Naive thymus-derived CD4-positive, alpha-beta T cell (primary cell): ENCODE measurements at regions of chr6 and their contacts with region 1.

Region 1: GRCh38 chr6:37324131-37325033 is 29.4 kb upstream of the RNF8 start:
- DNase-seq: no peak
- ATAC-seq: no peak
- H3K4me3 ChIP-seq: no peak overlapping the region
- H3K4me3 Mint-ChIP-seq: no peak overlapping the region
- H3K27ac ChIP-seq: no peak overlapping the region
- H3K27ac Mint-ChIP-seq: peak overlapping the region in 5 of 9 donors; percentile 2 to 48 (median 11)
- H3K4me1 ChIP-seq: no peaks in the 10 kb centered on the region
- H3K4me1 Mint-ChIP-seq: peaks cover 0 to 16% (median 4%) of the 10 kb centered on the region in 7 donors
- H3K27me3 ChIP-seq: no peaks in the 10 kb centered on the region
- H3K27me3 Mint-ChIP-seq: no peaks in the 10 kb centered on the region

Region 2: DNA sequence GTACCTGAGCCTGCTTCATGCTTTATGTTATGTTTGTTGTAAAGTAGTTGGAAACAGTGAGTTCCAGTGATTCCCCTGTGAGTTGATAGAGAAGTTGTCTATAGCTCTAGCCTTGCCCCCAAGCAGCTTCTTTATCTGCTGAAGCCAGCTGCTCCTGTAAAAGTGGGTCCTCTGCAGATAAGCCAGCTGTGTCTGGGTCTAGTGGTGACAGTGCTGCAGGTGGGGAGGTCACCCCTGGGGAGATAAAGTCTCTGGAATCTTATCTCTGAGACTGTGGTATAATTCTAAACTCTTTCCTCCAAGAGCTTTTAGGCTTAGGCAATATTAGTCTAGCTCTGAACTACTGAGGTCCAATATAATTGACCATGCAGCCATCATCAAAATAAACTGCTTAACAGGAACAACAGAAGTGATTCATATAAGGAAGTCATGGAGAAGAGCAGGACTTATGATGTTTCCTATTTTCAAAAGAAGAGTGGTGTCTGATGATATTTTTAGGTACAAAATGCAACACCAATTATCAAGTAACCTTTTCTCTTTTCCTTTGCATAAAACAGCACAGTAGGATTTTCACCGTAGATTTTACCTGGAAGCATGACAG is 22.2 kb before region 1 on chr6:
- CTCF ChIA-PET with region 1: no interaction called
- POLR2A ChIA-PET with region 1: no interaction called
- intact Hi-C with region 1: no loop called
- DNase-seq: no peak
- ATAC-seq: no peak
- H3K4me3 ChIP-seq: no peak overlapping the region
- H3K4me3 Mint-ChIP-seq: no peak overlapping the region
- H3K27ac ChIP-seq: no peak overlapping the region
- H3K27ac Mint-ChIP-seq: no peak overlapping the region
- H3K4me1 ChIP-seq: no peaks in the 10 kb centered on the region
- H3K4me1 Mint-ChIP-seq: peaks cover 0 to 36% (median 0%) of the 10 kb centered on the region in 7 donors
- H3K27me3 ChIP-seq: no peaks in the 10 kb centered on the region
- H3K27me3 Mint-ChIP-seq: no peaks in the 10 kb centered on the region

Region 3: GRCh38 chr6:37353761-37354525 is 29.6 kb after region 1 on chr6 and contains the start of gene RNF8:
- CTCF ChIA-PET with region 1: no interaction called
- POLR2A ChIA-PET with region 1: no interaction called
- intact Hi-C with region 1: loop called in 1 of 2 experiments (anchors 1 kb)
- DNase-seq: peak; percentile 72 to 92 (median 84)
- ATAC-seq: peak; percentile 96
- H3K4me3 ChIP-seq: peak within 1 kb of the TSS; percentile 94
- H3K4me3 Mint-ChIP-seq: peak within 1 kb of the TSS; percentile 90 to 98 (median 95)
- H3K27ac ChIP-seq: peak within 1 kb of the TSS; percentile 79
- H3K27ac Mint-ChIP-seq: peak within 1 kb of the TSS; percentile 81 to 93 (median 88)
- H3K4me1 ChIP-seq: peaks cover 7 to 14% of the 10 kb centered on the region in 2 donors
- H3K4me1 Mint-ChIP-seq: peaks cover 21 to 49% (median 37%) of the 10 kb centered on the region in 7 donors
- H3K27me3 ChIP-seq: no peaks in the 10 kb centered on the region
- H3K27me3 Mint-ChIP-seq: no peaks in the 10 kb centered on the region
- total RNA-seq, gene RNF8: 7.1 to 26.0 (median 15.8) TPM

Region 4: DNA sequence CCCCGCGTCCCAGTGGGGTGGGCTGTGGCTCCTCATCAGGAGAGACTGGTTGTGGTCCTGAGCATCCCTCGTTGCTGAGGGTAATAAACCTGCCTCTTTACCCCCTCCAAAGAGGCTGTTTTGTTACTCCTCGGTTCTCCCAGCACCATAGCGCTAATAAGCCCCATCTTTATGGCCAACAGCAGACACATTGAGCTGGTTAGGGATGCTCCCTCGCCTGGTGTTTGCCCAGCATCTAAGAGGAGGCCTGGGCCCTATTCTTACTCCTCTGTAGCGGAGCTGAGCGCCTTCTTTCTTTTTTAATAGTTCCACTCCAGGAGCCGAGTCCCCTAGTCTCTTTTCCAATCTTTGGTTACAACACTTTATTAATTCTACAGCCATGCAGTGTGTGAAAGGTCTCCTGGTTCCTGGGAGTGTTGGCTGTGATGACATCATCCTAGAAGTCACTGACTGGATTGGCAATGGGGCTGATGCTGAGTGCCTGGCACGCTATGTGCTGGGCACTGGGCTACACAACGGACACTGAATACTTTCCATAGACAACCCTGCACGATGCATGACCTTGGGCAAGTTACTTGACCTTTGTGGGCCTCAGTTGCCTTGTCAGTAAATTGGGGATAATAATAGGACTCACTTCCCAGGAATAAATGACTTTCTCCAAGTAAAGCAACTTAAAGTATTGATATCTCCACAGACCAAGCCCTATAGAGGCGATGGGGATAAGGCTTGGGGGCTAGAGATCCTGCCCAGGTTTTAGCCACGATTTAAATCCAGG is 226.0 kb after region 1 on chr6:
- CTCF ChIA-PET with region 1: no interaction called
- POLR2A ChIA-PET with region 1: no interaction called
- intact Hi-C with region 1: no loop called
- DNase-seq: no peak
- ATAC-seq: no peak
- H3K4me3 ChIP-seq: no peak overlapping the region
- H3K4me3 Mint-ChIP-seq: no peak overlapping the region
- H3K27ac ChIP-seq: no peak overlapping the region
- H3K27ac Mint-ChIP-seq: no peak overlapping the region
- H3K4me1 ChIP-seq: peaks cover 14 to 28% of the 10 kb centered on the region in 2 donors
- H3K4me1 Mint-ChIP-seq: peaks cover 6 to 45% (median 28%) of the 10 kb centered on the region in 7 donors
- H3K27me3 ChIP-seq: no peaks in the 10 kb centered on the region
- H3K27me3 Mint-ChIP-seq: no peaks in the 10 kb centered on the region

Region 5: DNA sequence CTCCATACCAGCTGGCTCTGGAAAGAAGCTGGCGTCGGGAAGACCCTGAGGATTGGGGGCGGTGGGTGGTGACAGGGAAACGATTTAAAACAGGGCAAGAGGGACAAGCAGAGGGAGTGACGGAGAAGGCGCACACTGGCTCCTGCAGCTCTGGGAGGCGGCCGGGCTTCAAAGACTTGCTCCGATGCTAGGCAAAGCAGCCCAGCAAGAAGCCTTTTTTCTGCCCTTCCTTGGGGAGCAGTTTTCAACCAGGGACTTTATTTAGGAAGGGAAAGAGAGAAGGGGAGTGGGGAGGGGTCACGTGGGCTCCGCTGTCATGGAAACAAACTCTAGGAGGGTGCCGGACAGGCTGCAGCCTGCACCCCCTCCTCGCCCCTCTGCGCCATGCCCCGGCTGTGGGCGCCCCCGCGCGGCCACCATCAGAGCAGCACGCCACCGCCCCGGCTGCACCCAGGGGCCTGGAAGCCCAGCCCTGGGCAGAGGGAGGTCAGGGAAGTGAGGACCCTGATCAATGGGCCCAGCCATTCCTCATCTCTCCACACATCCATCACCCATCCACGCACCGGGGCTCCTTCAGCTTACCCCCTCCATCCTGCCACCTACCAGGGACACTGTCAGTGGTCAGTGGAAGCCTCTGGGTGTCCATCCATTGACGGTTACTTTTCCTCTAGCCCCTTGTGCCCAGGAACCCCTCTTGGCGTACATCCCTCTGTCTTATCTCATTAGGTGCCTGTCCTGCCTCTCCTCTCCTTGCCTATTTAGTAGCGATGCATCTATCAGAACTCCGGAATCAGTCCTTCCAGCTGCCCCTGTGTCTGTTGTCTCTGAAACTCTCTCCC is 241.9 kb after region 1 on chr6:
- CTCF ChIA-PET with region 1: interaction called, 4 read pairs
- POLR2A ChIA-PET with region 1: no interaction called
- intact Hi-C with region 1: loop called (anchors 1 to 2 kb)
- DNase-seq: peak; percentile 45 to 86 (median 70)
- ATAC-seq: peak; percentile 93
- H3K4me3 ChIP-seq: peak overlapping the region; percentile 52
- H3K4me3 Mint-ChIP-seq: peak overlapping the region in 9 of 10 donors; percentile 37 to 80 (median 63)
- H3K27ac ChIP-seq: no peak overlapping the region
- H3K27ac Mint-ChIP-seq: peak overlapping the region in 2 of 9 donors; percentile 8 to 12
- H3K4me1 ChIP-seq: peaks cover 0 to 4% of the 10 kb centered on the region in 2 donors
- H3K4me1 Mint-ChIP-seq: peaks cover 6 to 21% (median 12%) of the 10 kb centered on the region in 7 donors
- H3K27me3 ChIP-seq: no peaks in the 10 kb centered on the region
- H3K27me3 Mint-ChIP-seq: peaks cover 3 to 28% (median 11%) of the 10 kb centered on the region in 5 donors